Activated CD4-positive, alpha-beta memory T cell treated with anti-CD3 and anti-CD28 coated beads for 36 hours (primary cell): ENCODE measurements at regions of chr10 and their contacts with region 1.

Region 1: DNA sequence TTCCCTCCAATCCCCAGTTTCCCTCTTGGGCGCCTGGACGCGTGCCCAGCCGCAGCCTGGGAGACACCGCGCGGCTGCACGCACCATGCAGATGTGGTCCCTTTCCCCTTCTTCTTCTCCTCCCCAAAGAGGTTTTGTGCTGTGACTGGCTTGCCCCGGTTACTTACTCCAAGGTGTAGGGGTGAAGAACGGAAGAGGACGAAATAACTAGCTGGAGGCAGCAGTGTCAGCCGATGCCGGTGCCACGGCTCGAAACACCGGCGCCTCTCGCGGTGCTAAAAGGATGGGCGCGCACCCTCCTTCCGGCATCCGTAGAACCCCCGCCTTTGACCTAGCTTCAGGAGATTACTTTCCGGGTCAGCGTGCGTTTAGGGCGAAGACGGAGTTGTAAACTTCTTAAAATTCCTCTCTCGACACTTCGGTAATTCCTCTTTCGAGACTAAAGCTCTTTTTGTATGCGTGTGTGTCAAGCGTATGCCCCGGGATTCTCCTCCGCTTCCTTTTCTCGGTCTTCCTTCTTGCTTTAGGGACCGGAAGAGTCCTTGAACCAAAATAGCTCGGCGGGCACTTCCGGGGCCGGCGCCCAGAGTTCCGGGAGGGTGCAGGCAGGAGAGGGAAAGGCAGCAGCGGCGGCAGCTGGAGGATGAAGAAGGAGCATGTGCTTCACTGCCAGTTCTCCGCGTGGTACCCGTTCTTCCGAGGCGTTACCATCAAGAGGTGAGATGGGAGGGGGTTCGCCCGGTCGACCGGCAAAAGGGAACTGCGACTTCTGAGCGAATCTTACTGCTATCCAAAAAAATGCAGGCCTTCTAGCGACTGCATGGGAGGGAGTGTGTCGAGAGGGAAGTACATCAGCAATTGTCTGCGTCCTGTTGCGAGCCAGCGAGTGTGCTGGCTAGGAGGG is at the starts of genes CDC123 and NUDT5:
- DNase-seq: peak; percentile 93
- H3K4me3 Mint-ChIP-seq: peak within 1 kb of the TSS; percentile 94
- H3K27ac Mint-ChIP-seq: peak within 1 kb of the TSS; percentile 100
- H3K4me1 Mint-ChIP-seq: peaks cover 46% of the 10 kb centered on the region
- H3K27me3 Mint-ChIP-seq: no peaks in the 10 kb centered on the region
- total RNA-seq, gene CDC123: 134 TPM
- total RNA-seq, gene NUDT5: 115 to 118 TPM

Region 2: GRCh38 chr10:12042797-12043651 is 152.8 kb before region 1 on chr10 and contains the start of gene UPF2:
- CTCF ChIA-PET with region 1: interaction called, 3 read pairs
- POLR2A ChIA-PET with region 1: interaction called, 5 read pairs
- intact Hi-C with region 1: loop called (anchors 2 kb)
- DNase-seq: peak; percentile 99
- H3K4me3 Mint-ChIP-seq: peak within 1 kb of the TSS; percentile 100
- H3K27ac Mint-ChIP-seq: peak within 1 kb of the TSS; percentile 98
- H3K4me1 Mint-ChIP-seq: peaks cover 32% of the 10 kb centered on the region
- H3K27me3 Mint-ChIP-seq: no peaks in the 10 kb centered on the region
- total RNA-seq, gene UPF2: 29.5 to 32.0 TPM

Region 3: GRCh38 chr10:12068449-12069269 is 127.2 kb before region 1 on chr10 and contains the start of gene DHTKD1:
- CTCF ChIA-PET with region 1: no interaction called
- POLR2A ChIA-PET with region 1: no interaction called
- intact Hi-C with region 1: loop called (anchors 5 kb)
- DNase-seq: peak; percentile 99
- H3K4me3 Mint-ChIP-seq: peak within 1 kb of the TSS; percentile 81
- H3K27ac Mint-ChIP-seq: peak within 1 kb of the TSS; percentile 82
- H3K4me1 Mint-ChIP-seq: peaks cover 22% of the 10 kb centered on the region
- H3K27me3 Mint-ChIP-seq: no peaks in the 10 kb centered on the region
- total RNA-seq, gene DHTKD1: 16.2 to 17.1 TPM

Region 4: GRCh38 chr10:12121673-12122072 is 74.2 kb before region 1 on chr10:
- CTCF ChIA-PET with region 1: no interaction called
- POLR2A ChIA-PET with region 1: interaction called, 3 read pairs
- intact Hi-C with region 1: loop called (anchors 2 kb)
- DNase-seq: no peak
- H3K4me3 Mint-ChIP-seq: peak overlapping the region; percentile 64
- H3K27ac Mint-ChIP-seq: peak overlapping the region; percentile 97
- H3K4me1 Mint-ChIP-seq: peaks cover 33% of the 10 kb centered on the region
- H3K27me3 Mint-ChIP-seq: no peaks in the 10 kb centered on the region

Region 5: DNA sequence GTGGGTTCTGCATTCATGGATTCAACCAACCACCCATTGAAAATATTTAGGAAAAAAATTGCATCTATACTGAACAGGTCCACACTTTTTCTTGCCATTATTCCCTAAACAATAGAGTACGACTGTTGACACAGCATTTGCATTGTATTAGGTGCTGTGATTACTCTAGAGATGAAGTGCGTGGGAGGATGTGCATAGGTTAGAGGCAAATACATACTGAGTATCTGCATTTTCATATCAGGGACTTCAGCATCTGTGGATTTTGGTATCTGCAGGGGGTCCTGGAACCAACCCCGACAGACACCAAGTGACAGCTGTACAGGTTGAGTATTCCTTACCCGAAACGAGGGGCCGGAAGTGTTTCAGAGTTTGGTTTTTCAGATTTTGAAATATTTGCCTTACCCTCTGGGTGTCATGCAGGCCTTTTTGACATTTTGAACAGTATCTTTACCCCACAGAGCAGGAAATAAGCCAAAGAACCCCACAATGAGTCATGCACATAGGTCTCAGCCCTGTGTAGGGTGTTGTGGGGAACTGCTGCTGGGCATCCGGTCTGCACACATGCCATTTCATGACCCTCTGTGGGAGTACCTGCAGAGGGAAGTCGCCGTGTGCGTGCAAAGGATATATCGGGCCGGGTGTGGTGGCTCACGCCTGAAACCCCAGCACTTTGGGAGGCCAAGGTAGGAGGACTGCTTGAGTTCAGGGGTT is 14.6 kb before region 1 on chr10:
- CTCF ChIA-PET with region 1: interaction called, 8 read pairs
- POLR2A ChIA-PET with region 1: interaction called, 3 read pairs
- intact Hi-C with region 1: loop called (anchors 1 kb)
- DNase-seq: peak; percentile 86
- H3K4me3 Mint-ChIP-seq: no peak overlapping the region
- H3K27ac Mint-ChIP-seq: peak overlapping the region; percentile 88
- H3K4me1 Mint-ChIP-seq: peaks cover 30% of the 10 kb centered on the region
- H3K27me3 Mint-ChIP-seq: no peaks in the 10 kb centered on the region

Region 6: DNA sequence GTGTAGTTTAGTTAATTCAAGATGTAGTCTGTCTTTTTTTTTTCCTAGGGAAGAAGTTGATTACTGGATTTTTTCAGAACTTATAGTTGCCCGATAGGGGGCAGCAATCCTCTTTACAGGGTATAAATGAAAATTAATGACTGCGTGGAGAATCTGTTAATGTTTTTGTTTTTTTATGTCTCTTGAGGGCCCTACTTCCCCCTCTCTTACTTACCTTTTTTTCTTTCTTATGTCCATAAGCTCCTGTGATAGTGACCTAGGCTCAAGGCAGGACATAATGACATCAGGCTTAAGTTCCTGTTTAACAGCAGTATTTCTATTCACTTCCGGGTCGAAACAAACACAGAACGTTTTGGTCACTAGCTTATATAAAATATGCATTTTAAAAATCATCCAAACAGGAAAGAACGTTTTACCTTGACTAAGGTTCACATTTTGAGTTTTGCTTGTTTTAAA is 18.9 kb after region 1 on chr10:
- CTCF ChIA-PET with region 1: interaction called, 25 read pairs
- POLR2A ChIA-PET with region 1: interaction called, 4 read pairs
- intact Hi-C with region 1: no loop called
- DNase-seq: peak; percentile 15
- H3K4me3 Mint-ChIP-seq: peak overlapping the region; percentile 41
- H3K27ac Mint-ChIP-seq: peak overlapping the region; percentile 79
- H3K4me1 Mint-ChIP-seq: peaks cover 16% of the 10 kb centered on the region
- H3K27me3 Mint-ChIP-seq: no peaks in the 10 kb centered on the region

Region 7: DNA sequence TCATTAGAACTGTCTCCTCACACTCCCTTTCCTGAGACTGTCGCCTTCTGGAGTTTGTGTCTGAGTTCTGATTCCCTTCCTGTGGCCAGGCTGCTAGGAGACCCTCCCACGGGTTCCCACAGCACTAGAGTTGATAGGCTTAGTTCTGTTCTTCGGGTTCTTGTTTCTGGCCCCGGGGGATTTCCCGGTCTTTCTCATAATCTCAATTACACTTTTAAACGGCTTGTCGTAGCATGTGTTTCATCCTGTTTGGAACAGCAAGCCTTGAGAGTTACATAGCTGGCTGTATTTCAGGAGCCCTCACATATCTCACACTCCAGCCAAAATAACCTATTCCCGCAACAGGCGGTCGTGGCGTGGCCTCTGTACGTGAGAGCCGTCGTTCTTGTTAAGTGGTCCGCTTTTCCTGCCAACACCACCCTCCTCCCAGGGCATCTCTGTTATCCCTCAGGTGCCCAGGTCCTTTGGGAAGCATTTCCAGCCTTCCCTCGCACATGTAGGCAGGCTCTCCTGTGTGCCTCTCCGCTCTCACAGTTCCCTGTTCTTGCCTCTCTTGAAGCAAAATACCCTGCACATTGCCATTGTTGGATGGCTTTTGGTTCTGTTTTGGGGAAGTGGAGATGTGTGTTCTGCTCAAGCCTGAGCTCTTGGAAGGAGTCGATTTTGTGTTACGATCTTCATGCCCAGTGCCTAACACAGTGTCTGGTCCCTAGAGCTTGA is 46.1 kb after region 1 on chr10:
- CTCF ChIA-PET with region 1: no interaction called
- POLR2A ChIA-PET with region 1: no interaction called
- intact Hi-C with region 1: loop called (anchors 2 kb)
- DNase-seq: peak; percentile 88
- H3K4me3 Mint-ChIP-seq: peak overlapping the region; percentile 44
- H3K27ac Mint-ChIP-seq: peak overlapping the region; percentile 82
- H3K4me1 Mint-ChIP-seq: peaks cover 37% of the 10 kb centered on the region
- H3K27me3 Mint-ChIP-seq: no peaks in the 10 kb centered on the region